Left colon (tissue), 2 donors: ENCODE measurements at regions of chr3 and their contacts with region 1.

Region 1: DNA sequence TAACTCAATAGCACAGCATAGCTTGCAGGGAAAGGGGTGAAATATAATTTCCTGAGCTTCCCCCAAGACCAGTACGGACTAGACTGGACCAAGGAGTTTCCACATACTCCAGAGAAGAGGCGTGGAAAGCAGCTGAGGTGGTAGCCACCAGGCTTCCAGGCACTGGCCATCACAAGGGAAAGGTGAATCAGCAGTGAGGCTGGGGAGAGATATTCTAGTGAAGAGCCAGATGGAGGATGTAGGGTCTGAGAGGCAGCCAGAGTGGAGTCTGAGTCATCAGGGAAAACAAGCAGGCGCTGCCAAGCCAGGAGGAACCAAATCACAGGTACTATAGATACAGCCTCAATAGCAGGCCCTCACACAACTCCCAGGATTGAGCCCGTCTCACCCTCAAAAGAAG is 9.6 kb upstream of the RASA2 start:
- DNase-seq: no peak
- ATAC-seq: no peak

Region 2: GRCh38 chr3:141553055-141553454 is 75.8 kb after region 1 on chr3:
- intact Hi-C with region 1: loop called in 1 of 2 experiments (anchors 10 kb)
- DNase-seq: no peak
- ATAC-seq: peak; percentile 21

Region 3: DNA sequence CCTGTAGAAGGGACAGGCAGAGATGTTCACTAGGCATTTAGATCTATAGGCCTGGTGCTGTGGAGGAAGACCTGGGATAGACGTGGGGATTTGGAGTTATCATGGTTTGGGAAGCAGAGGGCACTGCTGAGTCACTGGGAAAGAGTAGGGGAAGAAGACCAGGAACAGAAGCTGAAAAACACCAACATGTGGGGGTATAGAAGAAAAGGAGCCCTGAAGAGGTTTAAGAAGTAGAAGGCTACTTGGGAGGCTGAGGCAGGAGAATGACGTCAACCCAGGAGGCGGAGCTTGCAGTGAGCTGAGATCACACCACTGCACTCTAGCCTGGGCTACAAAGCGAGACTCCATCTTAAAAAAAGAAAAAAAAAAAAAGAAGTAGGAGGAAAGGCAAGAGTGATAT is 305.2 kb after region 1 on chr3:
- intact Hi-C with region 1: no loop called
- DNase-seq: no peak
- ATAC-seq: peak; percentile 86